ENCODE measurements at regions of chr5 and their contacts with region 1.

Region 1: DNA sequence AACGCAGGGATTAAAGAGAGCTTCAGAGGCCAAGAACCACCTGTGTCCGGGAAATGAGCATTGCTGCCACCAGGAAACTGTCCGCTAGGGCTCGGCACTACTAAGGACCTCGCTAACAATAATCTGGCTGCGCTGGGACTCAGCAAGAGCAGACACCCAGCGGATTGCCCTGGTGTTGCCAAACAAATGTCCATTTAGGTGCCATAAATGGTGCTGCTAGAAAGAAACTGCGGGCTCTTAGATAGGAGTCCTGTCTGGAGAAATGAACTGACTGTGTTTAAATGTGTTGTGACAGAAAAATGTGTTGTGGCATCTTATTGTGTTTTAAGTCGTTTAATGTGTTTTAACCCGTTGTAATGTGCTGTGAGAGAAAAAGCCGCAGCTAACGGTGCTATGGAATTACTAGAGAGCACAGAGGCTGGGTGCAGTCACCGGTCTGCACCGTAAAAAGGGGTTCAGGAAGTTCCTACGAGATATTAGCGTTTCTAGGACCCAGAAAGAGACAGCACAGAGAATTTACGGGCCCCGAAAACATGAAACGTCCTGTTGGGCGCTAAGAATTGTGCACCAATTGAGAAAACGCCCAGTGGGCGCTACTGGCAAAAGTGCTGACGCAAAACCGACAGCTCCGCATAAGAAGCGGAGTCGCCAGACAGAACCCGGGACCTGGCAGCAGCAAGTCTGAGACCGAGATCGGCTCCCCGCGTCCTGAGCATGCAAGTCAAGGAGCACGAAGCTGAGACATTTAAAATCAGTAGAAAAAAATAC is 90.6 kb downstream of the ANXA2R start:
- DNase-seq: peak; percentile 76
- ATAC-seq: peak; percentile 100
- H3K4me3 ChIP-seq: no peak overlapping the region; a peak in 1 of 6 replicates
- H3K27ac ChIP-seq: no peak overlapping the region
- H3K4me1 ChIP-seq: no peaks in the 10 kb centered on the region
- H3K27me3 ChIP-seq: peaks cover 3 to 6% of the 10 kb centered on the region in 2 experiments; a peak in 3 of 5 replicates
- CTCF ChIP-seq: peak; percentile 35
- EP300 ChIP-seq: no peak
- POLR2A ChIP-seq: no peak
- RAD21 ChIP-seq: no peak

Region 2: DNA sequence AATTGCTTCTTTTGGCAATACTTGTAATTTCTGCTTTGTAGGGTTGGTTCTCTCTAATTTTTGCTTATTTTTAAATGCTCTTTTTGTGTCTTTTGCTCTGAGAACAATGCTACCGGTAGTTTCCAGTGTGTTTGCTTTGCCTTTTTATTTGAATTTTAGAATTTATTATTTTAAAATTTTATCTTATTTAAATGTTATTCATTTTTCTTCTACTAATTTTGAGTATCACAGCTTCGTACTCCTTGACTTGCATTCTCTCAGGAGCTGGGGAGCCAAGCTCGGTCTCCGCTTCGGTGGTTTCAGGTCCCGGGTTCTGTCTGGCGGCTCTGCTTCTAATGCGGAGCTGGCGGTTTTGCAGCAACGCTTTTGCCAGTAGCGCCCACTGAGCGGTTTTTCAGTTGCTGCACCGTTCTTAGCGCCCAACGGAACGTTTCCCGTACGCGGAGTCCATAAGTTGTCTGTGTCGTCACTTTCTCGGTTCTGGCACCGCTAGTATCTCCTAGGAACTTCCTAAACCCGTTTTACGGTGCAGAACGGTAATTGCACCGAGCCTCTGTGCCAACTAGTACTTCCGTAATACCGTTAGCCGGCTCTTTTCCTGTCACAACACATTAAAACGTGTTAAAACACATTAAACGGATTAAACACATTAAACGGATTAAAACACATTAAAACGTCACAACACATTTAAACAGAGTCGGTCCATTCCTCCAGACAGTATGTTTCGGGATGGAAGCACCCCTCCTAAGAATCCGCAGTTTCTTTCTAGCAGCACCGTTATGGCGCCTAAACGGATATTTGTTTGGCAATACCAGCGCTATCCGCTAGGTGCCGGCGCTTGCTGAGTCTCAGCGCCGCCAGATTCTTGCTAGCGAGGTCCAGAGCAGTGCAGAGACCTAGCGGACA is 45.0 kb after region 1 on chr5:
- CTCF ChIA-PET with region 1: no interaction called
- POLR2A ChIA-PET with region 1: no interaction called
- in situ Hi-C with region 1: no loop called
- intact Hi-C with region 1: loop called (anchors 5 kb)
- DNase-seq: peak; percentile 81
- ATAC-seq: peak; percentile 86
- H3K4me3 ChIP-seq: peak overlapping the region; percentile 75 to 93 (median 77)
- H3K27ac ChIP-seq: peak overlapping the region; percentile 64
- H3K4me1 ChIP-seq: peaks cover 25% of the 10 kb centered on the region
- H3K27me3 ChIP-seq: no peaks in the 10 kb centered on the region
- CTCF ChIP-seq: peak; percentile 87
- EP300 ChIP-seq: no peak
- POLR2A ChIP-seq: peak in 1 of 2 experiments; percentile 43; a peak in 1 of 4 replicates
- RAD21 ChIP-seq: 0 out of 2 replicates have a peak, but pooled peaks have one; percentile 40

Region 3: DNA sequence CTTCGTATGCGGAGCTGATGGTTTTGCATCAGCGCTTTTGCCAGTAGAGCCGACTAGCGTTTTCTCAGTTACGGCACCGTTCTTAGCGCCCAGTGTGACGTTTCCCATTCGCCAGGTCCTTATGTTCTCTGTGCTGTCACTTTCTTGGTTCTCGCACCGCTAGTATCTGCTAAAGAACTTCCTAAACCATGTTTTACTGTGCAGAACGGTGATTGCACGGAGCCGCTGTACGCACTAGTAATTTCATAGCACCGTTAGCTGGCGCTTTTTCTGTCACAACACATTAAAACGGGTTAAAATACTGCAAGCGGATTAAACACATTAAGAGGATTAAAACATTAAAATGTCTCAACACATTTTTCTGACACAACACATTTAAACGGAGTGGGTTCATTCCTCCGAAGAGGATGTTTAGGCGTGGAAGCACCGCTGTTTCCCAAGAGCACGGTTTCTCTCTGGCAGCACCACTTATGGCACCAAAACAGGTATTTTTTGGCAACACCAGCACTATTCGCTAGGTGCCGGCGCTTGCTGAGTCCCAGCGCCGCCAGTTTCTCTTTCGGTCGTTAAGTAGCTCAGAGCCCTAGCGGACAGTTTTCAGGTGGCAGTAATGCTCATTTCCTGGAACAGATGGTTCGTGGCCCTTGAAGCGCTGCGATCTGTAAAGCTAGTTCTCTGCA is 70.2 kb after region 1 on chr5:
- CTCF ChIA-PET with region 1: no interaction called
- POLR2A ChIA-PET with region 1: no interaction called
- in situ Hi-C with region 1: no loop called
- intact Hi-C with region 1: no loop called
- DNase-seq: peak; percentile 88
- ATAC-seq: peak; percentile 83
- H3K4me3 ChIP-seq: peak overlapping the region; percentile 69 to 86 (median 82)
- H3K27ac ChIP-seq: peak overlapping the region; percentile 92
- H3K4me1 ChIP-seq: peaks cover 39% of the 10 kb centered on the region
- H3K27me3 ChIP-seq: no peaks in the 10 kb centered on the region; a peak in 1 of 5 replicates
- CTCF ChIP-seq: peak; percentile 44
- EP300 ChIP-seq: no peak
- POLR2A ChIP-seq: no peak
- RAD21 ChIP-seq: no peak

Region 4: GRCh38 chr5:43851741-43852140 is 902.2 kb after region 1 on chr5:
- CTCF ChIA-PET with region 1: no interaction called
- POLR2A ChIA-PET with region 1: no interaction called
- in situ Hi-C with region 1: no loop called
- intact Hi-C with region 1: no loop called
- DNase-seq: no peak
- ATAC-seq: no peak
- H3K4me3 ChIP-seq: no peak overlapping the region
- H3K27ac ChIP-seq: no peak overlapping the region
- H3K4me1 ChIP-seq: no peaks in the 10 kb centered on the region
- H3K27me3 ChIP-seq: no peaks in the 10 kb centered on the region; a peak in 1 of 5 replicates
- CTCF ChIP-seq: no peak
- EP300 ChIP-seq: no peak
- POLR2A ChIP-seq: no peak
- RAD21 ChIP-seq: no peak